CD4-positive, alpha-beta T cell (primary cell): ENCODE measurements at regions of chr5 and their contacts with region 1.

Region 1: DNA sequence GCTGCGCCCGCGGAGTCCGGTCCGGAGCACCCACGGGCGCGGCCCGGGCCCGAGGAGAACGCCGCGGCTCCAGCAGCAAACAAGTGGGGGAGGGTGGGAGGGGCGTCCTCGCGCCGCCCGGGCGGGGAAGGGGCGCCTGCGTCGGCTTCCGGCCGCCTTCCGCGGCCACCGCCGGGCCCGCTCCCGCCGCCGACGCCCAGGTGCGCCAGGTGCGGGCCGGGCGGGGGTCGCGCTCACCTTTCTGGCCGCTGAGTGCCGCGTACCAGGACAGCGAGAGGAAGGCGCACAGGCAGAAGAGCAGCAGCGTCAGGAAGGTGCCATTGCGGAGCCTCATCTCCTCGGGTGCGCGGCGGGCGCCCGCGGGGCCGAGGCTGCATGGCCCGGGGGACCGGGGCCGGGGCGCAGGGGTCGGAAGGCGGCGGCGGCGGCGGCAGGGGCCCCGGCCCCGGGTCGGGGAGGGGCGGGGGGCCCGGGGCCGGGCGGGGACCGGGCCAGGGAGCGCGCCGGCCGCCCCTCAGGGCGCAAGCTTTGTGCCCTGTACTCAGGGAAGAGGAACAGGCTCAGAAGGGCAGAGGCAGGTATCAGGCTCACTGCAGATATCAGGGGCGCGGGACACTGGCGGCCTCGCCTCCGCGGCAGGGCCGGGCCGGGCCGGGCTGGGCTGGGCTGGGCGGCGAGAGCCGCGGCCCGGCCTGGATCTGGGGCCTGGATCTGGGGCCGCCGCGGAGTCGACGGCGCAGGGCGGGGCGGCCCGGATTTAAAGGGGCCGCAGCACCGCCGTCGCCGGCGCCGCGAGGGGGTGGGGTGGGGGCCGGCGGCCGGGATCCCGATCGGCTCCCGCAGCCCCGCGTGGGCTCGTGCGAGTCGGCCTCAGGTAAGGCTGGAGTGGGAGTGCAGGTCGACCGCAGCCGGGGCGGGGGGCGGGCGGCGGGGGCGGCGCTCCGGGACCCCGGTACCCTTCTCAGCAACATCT is at the start of gene MGAT4B:
- DNase-seq: peak in 13 of 14 experiments; percentile 39 to 82 (median 62)
- ATAC-seq: peak; percentile 72
- H3K4me3 ChIP-seq: peak within 1 kb of the TSS; percentile 60
- H3K4me3 Mint-ChIP-seq: peak within 1 kb of the TSS; percentile 76
- H3K27ac ChIP-seq: peak within 1 kb of the TSS; percentile 48 to 67
- H3K27ac Mint-ChIP-seq: no peak within 1 kb of the TSS
- H3K4me1 ChIP-seq: peaks cover 54% of the 10 kb centered on the region
- H3K4me1 Mint-ChIP-seq: peaks cover 33% of the 10 kb centered on the region
- H3K27me3 ChIP-seq: no peaks in the 10 kb centered on the region
- H3K27me3 Mint-ChIP-seq: no peaks in the 10 kb centered on the region
- CTCF ChIP-seq: no peak
- total RNA-seq, gene MGAT4B: 141 to 145 TPM

Region 2: DNA sequence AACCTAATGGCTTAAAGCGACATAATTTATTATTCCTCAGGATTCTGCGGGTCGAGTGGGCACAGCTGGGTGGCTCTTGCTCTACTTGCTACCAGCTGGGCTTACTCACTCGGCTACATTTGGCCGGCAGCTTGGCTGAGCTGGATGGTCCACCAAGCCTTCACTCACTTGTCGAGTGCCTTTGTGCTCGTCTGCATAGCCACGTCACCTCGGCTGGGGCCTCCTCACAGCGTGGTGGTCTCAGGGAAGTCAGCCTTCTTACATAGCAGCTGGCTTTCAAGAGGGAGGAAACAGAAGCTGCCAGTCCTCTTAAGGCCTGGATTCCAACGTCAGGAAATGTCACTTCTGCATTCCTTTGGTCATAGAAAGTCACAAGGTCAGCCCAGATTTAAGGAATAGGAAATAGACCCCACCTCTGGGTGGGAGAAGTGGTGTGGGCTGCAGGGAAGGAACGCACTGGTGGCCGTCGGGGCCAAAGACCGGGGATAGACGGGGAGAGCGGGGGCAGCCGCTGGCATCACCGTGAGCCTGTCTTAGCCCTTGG is 331.3 kb before region 1 on chr5:
- CTCF ChIA-PET with region 1: no interaction called
- POLR2A ChIA-PET with region 1: no interaction called
- intact Hi-C with region 1: no loop called
- DNase-seq: no peak
- ATAC-seq: no peak
- H3K4me3 ChIP-seq: no peak overlapping the region
- H3K4me3 Mint-ChIP-seq: no peak overlapping the region
- H3K27ac ChIP-seq: no peak overlapping the region
- H3K27ac Mint-ChIP-seq: no peak overlapping the region
- H3K4me1 ChIP-seq: no peaks in the 10 kb centered on the region
- H3K4me1 Mint-ChIP-seq: no peaks in the 10 kb centered on the region
- H3K27me3 ChIP-seq: no peaks in the 10 kb centered on the region
- H3K27me3 Mint-ChIP-seq: peaks cover 27% of the 10 kb centered on the region
- CTCF ChIP-seq: no peak

Region 3: GRCh38 chr5:179694561-179694960 is 112.0 kb before region 1 on chr5:
- CTCF ChIA-PET with region 1: no interaction called
- POLR2A ChIA-PET with region 1: no interaction called
- intact Hi-C with region 1: no loop called
- DNase-seq: no peak
- ATAC-seq: no peak
- H3K4me3 ChIP-seq: no peak overlapping the region
- H3K4me3 Mint-ChIP-seq: peak overlapping the region; percentile 58
- H3K27ac ChIP-seq: no peak overlapping the region
- H3K27ac Mint-ChIP-seq: no peak overlapping the region
- H3K4me1 ChIP-seq: peaks cover 23% of the 10 kb centered on the region
- H3K4me1 Mint-ChIP-seq: peaks cover 28% of the 10 kb centered on the region
- H3K27me3 ChIP-seq: no peaks in the 10 kb centered on the region
- H3K27me3 Mint-ChIP-seq: no peaks in the 10 kb centered on the region
- CTCF ChIP-seq: no peak

Region 4: GRCh38 chr5:179763215-179763945 is 43.2 kb before region 1 on chr5:
- CTCF ChIA-PET with region 1: interaction called, 15 read pairs
- POLR2A ChIA-PET with region 1: interaction called, 4 read pairs
- intact Hi-C with region 1: no loop called
- DNase-seq: peak; percentile 19 to 80 (median 38)
- ATAC-seq: peak; percentile 73
- H3K4me3 ChIP-seq: no peak overlapping the region
- H3K4me3 Mint-ChIP-seq: no peak overlapping the region
- H3K27ac ChIP-seq: no peak overlapping the region
- H3K27ac Mint-ChIP-seq: peak overlapping the region; percentile 52
- H3K4me1 ChIP-seq: peaks cover 53% of the 10 kb centered on the region
- H3K4me1 Mint-ChIP-seq: peaks cover 66% of the 10 kb centered on the region
- H3K27me3 ChIP-seq: no peaks in the 10 kb centered on the region
- H3K27me3 Mint-ChIP-seq: no peaks in the 10 kb centered on the region
- CTCF ChIP-seq: peak; percentile 94

Region 5: GRCh38 chr5:179821581-179822432 is 15.3 kb after region 1 on chr5:
- CTCF ChIA-PET with region 1: interaction called, 5 read pairs
- POLR2A ChIA-PET with region 1: interaction called, 48 read pairs
- intact Hi-C with region 1: loop called (anchors 1 kb)
- DNase-seq: peak; percentile 69 to 95 (median 84)
- ATAC-seq: peak; percentile 66
- H3K4me3 ChIP-seq: peak overlapping the region; percentile 83
- H3K4me3 Mint-ChIP-seq: peak overlapping the region; percentile 99
- H3K27ac ChIP-seq: peak overlapping the region; percentile 84 to 96
- H3K27ac Mint-ChIP-seq: peak overlapping the region; percentile 99
- H3K4me1 ChIP-seq: peaks cover 64% of the 10 kb centered on the region
- H3K4me1 Mint-ChIP-seq: peaks cover 61% of the 10 kb centered on the region
- H3K27me3 ChIP-seq: peaks cover 0 to 4% of the 10 kb centered on the region in 2 experiments
- H3K27me3 Mint-ChIP-seq: no peaks in the 10 kb centered on the region
- CTCF ChIP-seq: no peak

Region 6: DNA sequence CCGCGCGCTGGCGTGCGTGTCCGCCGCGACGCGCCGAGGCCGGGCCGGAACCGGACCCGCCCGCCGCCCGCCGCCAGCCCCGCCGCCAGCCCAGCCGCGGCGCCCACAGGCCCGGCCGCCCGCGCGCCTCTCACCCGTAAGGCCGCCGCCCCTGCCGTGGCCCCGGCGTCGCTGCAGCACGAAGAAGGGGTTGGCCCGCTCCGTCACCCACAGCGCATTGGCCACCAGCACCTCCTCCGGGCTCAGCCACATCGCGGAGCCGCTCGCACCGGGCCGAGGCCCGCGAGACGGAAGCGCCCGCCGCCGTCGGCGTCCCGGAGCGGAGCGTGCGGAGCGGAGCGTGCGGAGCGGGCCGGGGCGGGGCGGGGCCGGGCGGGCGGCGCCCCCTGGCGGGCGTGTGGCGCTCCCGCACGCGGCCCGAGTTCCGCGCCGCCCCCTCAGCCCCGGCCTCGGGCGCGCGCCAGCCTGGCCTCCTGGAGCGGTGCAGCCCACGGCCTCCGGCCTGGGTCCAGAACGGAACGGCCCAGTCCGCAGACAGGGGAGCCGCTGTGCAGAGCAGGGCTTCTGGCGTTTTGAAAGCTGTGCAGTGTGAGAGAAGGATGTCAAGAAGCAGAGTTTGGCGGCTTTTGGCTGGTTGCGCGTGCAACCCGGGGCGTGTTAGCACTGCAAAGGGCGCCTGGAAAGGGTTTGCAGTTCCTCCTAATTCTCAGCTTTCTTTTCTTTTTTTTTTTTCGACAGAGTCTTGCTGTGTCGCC is 101.2 kb after region 1 on chr5 and contains the start of gene TBC1D9B:
- CTCF ChIA-PET with region 1: interaction called, 27 read pairs
- POLR2A ChIA-PET with region 1: interaction called, 10 read pairs
- intact Hi-C with region 1: loop called (anchors 1 to 2 kb)
- DNase-seq: peak; percentile 45 to 93 (median 64)
- ATAC-seq: peak; percentile 90
- H3K4me3 ChIP-seq: peak within 1 kb of the TSS; percentile 60
- H3K4me3 Mint-ChIP-seq: peak within 1 kb of the TSS; percentile 95
- H3K27ac ChIP-seq: no peak within 1 kb of the TSS
- H3K27ac Mint-ChIP-seq: peak within 1 kb of the TSS; percentile 82
- H3K4me1 ChIP-seq: peaks cover 25% of the 10 kb centered on the region
- H3K4me1 Mint-ChIP-seq: peaks cover 23% of the 10 kb centered on the region
- H3K27me3 ChIP-seq: no peaks in the 10 kb centered on the region
- H3K27me3 Mint-ChIP-seq: no peaks in the 10 kb centered on the region
- CTCF ChIP-seq: peak; percentile 17
- total RNA-seq, gene TBC1D9B: 67.5 to 71.8 TPM

Region 7: GRCh38 chr5:180090098-180090768 is 283.7 kb after region 1 on chr5:
- CTCF ChIA-PET with region 1: interaction called, 3 read pairs
- POLR2A ChIA-PET with region 1: no interaction called
- intact Hi-C with region 1: loop called (anchors 2 kb)
- DNase-seq: peak; percentile 64 to 91 (median 78)
- ATAC-seq: peak; percentile 58
- H3K4me3 ChIP-seq: peak overlapping the region; percentile 64
- H3K4me3 Mint-ChIP-seq: peak overlapping the region; percentile 81
- H3K27ac ChIP-seq: no peak overlapping the region
- H3K27ac Mint-ChIP-seq: peak overlapping the region; percentile 88
- H3K4me1 ChIP-seq: peaks cover 21% of the 10 kb centered on the region
- H3K4me1 Mint-ChIP-seq: peaks cover 19% of the 10 kb centered on the region
- H3K27me3 ChIP-seq: no peaks in the 10 kb centered on the region
- H3K27me3 Mint-ChIP-seq: peaks cover 3% of the 10 kb centered on the region
- CTCF ChIP-seq: peak; percentile 83